ENCODE measurements at regions of chr18 and their contacts with region 1.

Region 1: GRCh38 chr18:61282926-61283325 is 50.3 kb upstream of the CDH20 start:
- DNase-seq: no peak
- ATAC-seq: no peak
- H3K4me3 ChIP-seq: no peak overlapping the region
- H3K27ac ChIP-seq: no peak overlapping the region
- H3K4me1 ChIP-seq: no peaks in the 10 kb centered on the region
- H3K27me3 ChIP-seq: no peaks in the 10 kb centered on the region
- CTCF ChIP-seq: no peak
- POLR2A ChIP-seq: no peak
- RAD21 ChIP-seq: no peak

Region 2: DNA sequence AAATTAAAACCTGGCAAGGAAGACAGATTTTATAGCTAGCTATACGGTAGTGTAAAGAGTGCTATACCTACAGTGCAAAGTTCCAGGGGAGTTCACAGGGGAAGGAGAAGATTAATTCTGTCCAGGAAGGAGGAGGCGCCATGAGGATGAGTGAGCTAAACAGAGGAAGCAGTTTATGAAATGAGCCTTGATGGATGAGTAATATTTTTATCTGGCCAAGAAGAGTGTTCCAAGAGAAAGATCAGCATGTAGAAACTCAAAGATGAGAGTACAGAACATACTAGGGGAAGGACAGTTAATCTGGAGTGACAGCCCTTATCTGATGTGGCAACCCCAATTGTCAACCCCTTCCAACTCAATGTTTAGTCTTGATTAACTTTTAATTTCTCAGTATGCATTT is 105.1 kb after region 1 on chr18:
- CTCF ChIA-PET with region 1: no interaction called
- POLR2A ChIA-PET with region 1: no interaction called
- dilution Hi-C with region 1: no loop called
- in situ Hi-C with region 1: no loop called
- intact Hi-C with region 1: no loop called
- DNase-seq: peak; percentile 12
- ATAC-seq: no peak
- H3K4me3 ChIP-seq: no peak overlapping the region
- H3K27ac ChIP-seq: no peak overlapping the region
- H3K4me1 ChIP-seq: no peaks in the 10 kb centered on the region
- H3K27me3 ChIP-seq: no peaks in the 10 kb centered on the region
- CTCF ChIP-seq: no peak
- POLR2A ChIP-seq: no peak
- RAD21 ChIP-seq: no peak

Region 3: GRCh38 chr18:61702007-61702406 is 419.1 kb after region 1 on chr18:
- CTCF ChIA-PET with region 1: no interaction called
- POLR2A ChIA-PET with region 1: no interaction called
- dilution Hi-C with region 1: no loop called
- in situ Hi-C with region 1: no loop called
- intact Hi-C with region 1: loop called (anchors 5 kb)
- DNase-seq: peak; percentile 89
- ATAC-seq: peak; percentile 62
- H3K4me3 ChIP-seq: no peak overlapping the region
- H3K27ac ChIP-seq: peak overlapping the region; percentile 83
- H3K4me1 ChIP-seq: peaks cover 5% of the 10 kb centered on the region
- H3K27me3 ChIP-seq: no peaks in the 10 kb centered on the region
- CTCF ChIP-seq: no peak
- POLR2A ChIP-seq: no peak
- RAD21 ChIP-seq: no peak